Caco-2 (cell line): ENCODE measurements at regions of chr11 and their contacts with region 1.

Region 1: DNA sequence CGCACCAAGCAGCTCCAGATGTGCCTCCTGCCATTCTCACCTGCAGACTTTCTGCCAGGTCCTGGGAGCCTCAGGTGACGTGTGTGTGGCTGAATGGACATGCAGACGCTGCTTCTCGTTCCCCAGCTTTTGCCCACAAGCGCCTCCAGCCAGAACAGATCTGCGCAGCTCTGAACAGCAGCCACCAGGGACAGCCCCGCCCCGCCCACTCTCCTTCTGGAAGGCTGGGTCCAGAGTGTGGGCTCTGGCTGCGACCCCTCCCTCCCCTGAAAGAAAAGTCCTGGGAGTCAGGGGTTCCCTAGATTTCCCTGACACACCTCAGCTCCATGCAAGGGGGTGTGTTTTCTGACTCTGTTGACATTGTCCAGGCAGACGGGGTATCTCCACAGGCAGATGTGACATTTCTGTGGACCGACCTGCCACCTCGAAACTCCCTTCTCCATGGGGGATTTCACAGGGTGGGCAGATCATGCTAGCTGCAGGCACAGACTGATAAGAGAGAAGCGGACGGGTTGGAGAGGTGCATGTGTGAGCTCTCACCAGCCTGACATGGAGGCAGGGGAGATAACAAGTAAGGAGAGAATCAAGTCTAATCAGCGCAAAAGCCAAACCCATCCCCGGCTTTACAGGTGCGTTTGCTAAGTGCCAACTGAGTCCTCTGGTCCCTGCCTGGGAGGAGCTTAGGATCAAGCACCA is 19.8 kb downstream of the SLCO2B1 start:
- DNase-seq: peak in 1 of 2 experiments; percentile 50
- H3K4me3 ChIP-seq: no peak overlapping the region
- H3K4me3 Mint-ChIP-seq: no peak overlapping the region
- H3K27ac Mint-ChIP-seq: peak overlapping the region; percentile 94
- H3K4me1 ChIP-seq: peaks cover 60% of the 10 kb centered on the region
- H3K4me1 Mint-ChIP-seq: peaks cover 61% of the 10 kb centered on the region
- H3K27me3 ChIP-seq: no peaks in the 10 kb centered on the region
- H3K27me3 Mint-ChIP-seq: no peaks in the 10 kb centered on the region
- CTCF ChIP-seq: no peak

Region 2: DNA sequence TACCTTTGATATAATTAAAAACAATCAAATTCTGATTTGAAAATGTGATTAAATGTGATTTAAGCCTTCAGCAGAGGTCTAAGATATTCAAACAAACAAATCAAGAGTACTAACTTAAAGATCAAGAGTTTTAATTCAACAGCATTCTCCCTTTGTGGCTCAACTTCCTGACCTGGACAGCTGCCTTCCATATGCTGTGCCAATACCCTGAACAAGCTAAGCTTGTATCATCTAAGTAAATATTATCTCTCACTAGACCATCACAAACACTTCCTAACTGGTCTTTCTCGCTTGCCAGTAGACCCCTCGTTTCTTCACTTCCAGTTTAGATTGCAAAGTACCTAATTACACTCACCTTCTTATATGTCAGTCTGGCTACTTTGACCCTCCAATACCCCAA is 823.3 kb before region 1 on chr11:
- CTCF ChIA-PET with region 1: no interaction called
- POLR2A ChIA-PET with region 1: no interaction called
- intact Hi-C with region 1: no loop called
- DNase-seq: no peak
- H3K4me3 ChIP-seq: no peak overlapping the region
- H3K4me3 Mint-ChIP-seq: no peak overlapping the region
- H3K27ac Mint-ChIP-seq: no peak overlapping the region
- H3K4me1 ChIP-seq: no peaks in the 10 kb centered on the region
- H3K4me1 Mint-ChIP-seq: no peaks in the 10 kb centered on the region
- H3K27me3 ChIP-seq: no peaks in the 10 kb centered on the region
- H3K27me3 Mint-ChIP-seq: no peaks in the 10 kb centered on the region
- CTCF ChIP-seq: no peak

Region 3: DNA sequence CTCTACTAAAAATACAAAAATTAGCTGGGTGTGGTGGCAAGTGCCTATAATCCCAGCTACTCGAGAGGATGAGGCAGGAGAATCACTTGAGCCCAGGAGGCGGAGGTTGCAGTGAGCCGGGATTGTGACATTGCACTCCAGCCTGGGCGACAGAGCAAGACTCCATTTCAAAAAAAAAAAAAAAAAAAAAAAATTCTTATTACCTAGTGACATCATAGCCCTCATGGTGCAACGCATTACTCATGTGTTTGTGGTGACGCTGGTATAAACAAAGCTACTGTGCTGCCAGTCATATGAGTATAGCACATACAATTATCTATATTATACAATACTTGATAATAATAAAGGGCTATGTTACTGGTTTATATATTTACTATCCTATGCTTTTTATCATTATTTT is 115.2 kb before region 1 on chr11:
- CTCF ChIA-PET with region 1: no interaction called
- POLR2A ChIA-PET with region 1: no interaction called
- intact Hi-C with region 1: no loop called
- DNase-seq: no peak
- H3K4me3 ChIP-seq: no peak overlapping the region
- H3K4me3 Mint-ChIP-seq: no peak overlapping the region
- H3K27ac Mint-ChIP-seq: no peak overlapping the region
- H3K4me1 ChIP-seq: no peaks in the 10 kb centered on the region
- H3K4me1 Mint-ChIP-seq: no peaks in the 10 kb centered on the region
- H3K27me3 ChIP-seq: no peaks in the 10 kb centered on the region; the same call in 1 of the 2 replicates
- H3K27me3 Mint-ChIP-seq: peaks cover 7% of the 10 kb centered on the region
- CTCF ChIP-seq: no peak

Region 4: DNA sequence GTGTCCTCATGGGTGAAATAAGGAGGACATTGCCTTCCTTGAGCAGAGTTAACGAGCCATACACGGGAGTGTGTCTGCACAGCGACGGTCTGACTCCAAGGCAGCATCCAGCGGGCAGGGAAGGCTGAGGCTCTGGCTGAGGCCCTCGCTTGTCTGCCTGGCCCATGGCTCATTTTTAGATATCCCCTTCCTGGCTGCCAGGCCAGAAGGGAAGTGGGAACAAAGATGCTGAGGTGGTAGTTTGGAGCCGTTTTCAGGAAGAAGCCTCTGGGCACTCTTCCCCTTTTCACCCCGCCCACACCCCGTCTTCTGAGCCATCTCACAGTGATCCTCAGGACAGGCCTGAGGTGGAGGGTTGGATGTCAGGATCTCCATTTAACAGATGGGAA is 22.8 kb before region 1 on chr11:
- CTCF ChIA-PET with region 1: interaction called, 130 read pairs
- POLR2A ChIA-PET with region 1: interaction called, 18 read pairs
- intact Hi-C with region 1: loop called (anchors 1 kb)
- DNase-seq: no peak
- H3K4me3 ChIP-seq: no peak overlapping the region
- H3K4me3 Mint-ChIP-seq: no peak overlapping the region
- H3K27ac Mint-ChIP-seq: peak overlapping the region; percentile 75
- H3K4me1 ChIP-seq: peaks cover 91% of the 10 kb centered on the region
- H3K4me1 Mint-ChIP-seq: peaks cover 59% of the 10 kb centered on the region
- H3K27me3 ChIP-seq: no peaks in the 10 kb centered on the region
- H3K27me3 Mint-ChIP-seq: no peaks in the 10 kb centered on the region
- CTCF ChIP-seq: no peak

Region 5: GRCh38 chr11:75182669-75183068 is 12.0 kb after region 1 on chr11:
- CTCF ChIA-PET with region 1: interaction called, 3 read pairs
- POLR2A ChIA-PET with region 1: interaction called, 3 read pairs
- intact Hi-C with region 1: loop called (anchors 2 kb)
- DNase-seq: no peak
- H3K4me3 ChIP-seq: no peak overlapping the region
- H3K4me3 Mint-ChIP-seq: no peak overlapping the region
- H3K27ac Mint-ChIP-seq: no peak overlapping the region
- H3K4me1 ChIP-seq: peaks cover 22% of the 10 kb centered on the region; the same call in 1 of the 2 replicates
- H3K4me1 Mint-ChIP-seq: peaks cover 22% of the 10 kb centered on the region
- H3K27me3 ChIP-seq: no peaks in the 10 kb centered on the region
- H3K27me3 Mint-ChIP-seq: no peaks in the 10 kb centered on the region
- CTCF ChIP-seq: no peak